ENCODE measurements at regions of chr10 and their contacts with region 1.

Region 1: GRCh38 chr10:13348216-13349017 is at the start of gene SEPHS1:
- DNase-seq: peak; percentile 51 to 89 (median 79)
- ATAC-seq: peak; percentile 67
- H3K4me3 ChIP-seq: peak within 1 kb of the TSS; percentile 83 to 93
- H3K4me3 Mint-ChIP-seq: peak within 1 kb of the TSS; percentile 96
- H3K27ac ChIP-seq: peak within 1 kb of the TSS; percentile 65 to 82
- H3K27ac Mint-ChIP-seq: peak within 1 kb of the TSS; percentile 94
- H3K4me1 ChIP-seq: peaks cover 48% of the 10 kb centered on the region
- H3K4me1 Mint-ChIP-seq: peaks cover 61% of the 10 kb centered on the region
- H3K27me3 ChIP-seq: no peaks in the 10 kb centered on the region
- H3K27me3 Mint-ChIP-seq: no peaks in the 10 kb centered on the region
- CTCF ChIP-seq: no peak
- total RNA-seq, gene SEPHS1: 16.9 to 19.2 TPM

Region 2: GRCh38 chr10:12042797-12043651 is 1305.4 kb before region 1 on chr10 and contains the start of gene UPF2:
- CTCF ChIA-PET with region 1: no interaction called
- POLR2A ChIA-PET with region 1: no interaction called
- intact Hi-C with region 1: loop called in 1 of 2 experiments (anchors 10 kb)
- DNase-seq: peak; percentile 93 to 98 (median 95)
- ATAC-seq: peak; percentile 86
- H3K4me3 ChIP-seq: peak within 1 kb of the TSS; percentile 93 to 96
- H3K4me3 Mint-ChIP-seq: peak within 1 kb of the TSS; percentile 94
- H3K27ac ChIP-seq: peak within 1 kb of the TSS; percentile 98 to 99
- H3K27ac Mint-ChIP-seq: peak within 1 kb of the TSS; percentile 100
- H3K4me1 ChIP-seq: peaks cover 14% of the 10 kb centered on the region
- H3K4me1 Mint-ChIP-seq: peaks cover 40% of the 10 kb centered on the region
- H3K27me3 ChIP-seq: peaks cover 0 to 2% of the 10 kb centered on the region in 2 experiments
- H3K27me3 Mint-ChIP-seq: no peaks in the 10 kb centered on the region
- CTCF ChIP-seq: no peak
- total RNA-seq, gene UPF2: 12.7 to 14.3 TPM

Region 3: DNA sequence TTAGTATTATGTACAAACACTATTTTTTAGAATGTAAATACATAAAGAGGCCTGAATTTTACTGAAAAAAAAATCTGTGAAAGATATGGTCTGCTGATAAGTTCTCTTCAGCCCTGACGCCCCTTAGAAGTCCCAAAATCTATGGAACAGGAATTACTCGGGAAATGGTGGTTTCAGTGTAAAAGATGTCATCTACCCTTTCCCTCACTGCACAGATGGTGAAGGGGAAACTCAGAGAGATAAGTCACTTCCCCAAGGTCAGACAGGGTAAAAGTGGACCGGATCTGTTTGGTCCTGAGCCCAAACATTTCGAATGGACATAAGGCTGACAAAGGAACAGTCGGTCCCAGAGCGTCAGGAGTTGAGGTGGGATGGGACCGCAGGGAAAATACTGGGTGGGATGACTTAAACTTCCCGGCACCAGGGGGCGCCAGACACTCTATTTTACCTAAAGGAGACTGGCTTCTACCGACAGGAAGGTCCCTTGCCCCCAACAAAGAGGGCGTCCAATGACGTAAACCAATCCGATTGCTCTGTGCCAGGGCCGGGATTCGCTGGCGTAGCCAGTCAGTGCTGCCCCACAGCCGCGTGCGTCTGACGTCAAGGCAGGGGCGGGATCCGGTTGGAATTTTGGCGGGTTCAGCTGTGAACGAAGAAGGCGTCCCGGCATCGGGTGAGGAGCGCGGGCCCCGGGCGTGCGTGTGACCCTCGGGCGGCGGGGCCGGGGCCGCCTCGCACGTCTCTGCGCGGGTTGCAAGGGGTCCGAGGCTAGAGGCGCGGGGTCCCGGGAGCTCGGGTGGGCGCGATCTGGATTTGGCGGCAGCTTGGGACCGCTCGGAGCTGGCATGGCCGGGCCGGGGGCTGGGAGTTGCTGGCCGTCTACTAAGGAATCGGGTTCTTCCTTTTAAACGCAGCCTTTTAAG is 187.2 kb before region 1 on chr10 and contains the start of gene MCM10:
- CTCF ChIA-PET with region 1: interaction called, 9 read pairs
- POLR2A ChIA-PET with region 1: no interaction called
- intact Hi-C with region 1: loop called (anchors 1 kb)
- DNase-seq: peak; percentile 93 to 99 (median 98)
- ATAC-seq: peak; percentile 100
- H3K4me3 ChIP-seq: peak within 1 kb of the TSS; percentile 44 to 49
- H3K4me3 Mint-ChIP-seq: peak within 1 kb of the TSS; percentile 88
- H3K27ac ChIP-seq: peak within 1 kb of the TSS in 1 of 2 experiments; percentile 40
- H3K27ac Mint-ChIP-seq: peak within 1 kb of the TSS; percentile 86
- H3K4me1 ChIP-seq: peaks cover 10% of the 10 kb centered on the region
- H3K4me1 Mint-ChIP-seq: peaks cover 14% of the 10 kb centered on the region
- H3K27me3 ChIP-seq: no peaks in the 10 kb centered on the region
- H3K27me3 Mint-ChIP-seq: no peaks in the 10 kb centered on the region
- CTCF ChIP-seq: peak; percentile 96
- total RNA-seq, gene MCM10: 0.08 to 0.19 TPM

Region 4: GRCh38 chr10:13299437-13300287 is 48.8 kb before region 1 on chr10 and contains the start of gene PHYH:
- CTCF ChIA-PET with region 1: interaction called, 30 read pairs
- POLR2A ChIA-PET with region 1: interaction called, 115 read pairs
- intact Hi-C with region 1: loop called (anchors 1 kb)
- DNase-seq: peak; percentile 65 to 93 (median 80)
- ATAC-seq: peak; percentile 52
- H3K4me3 ChIP-seq: peak within 1 kb of the TSS; percentile 68 to 70
- H3K4me3 Mint-ChIP-seq: peak within 1 kb of the TSS; percentile 84
- H3K27ac ChIP-seq: peak within 1 kb of the TSS; percentile 81 to 91
- H3K27ac Mint-ChIP-seq: peak within 1 kb of the TSS; percentile 94
- H3K4me1 ChIP-seq: peaks cover 28% of the 10 kb centered on the region
- H3K4me1 Mint-ChIP-seq: peaks cover 26% of the 10 kb centered on the region
- H3K27me3 ChIP-seq: no peaks in the 10 kb centered on the region
- H3K27me3 Mint-ChIP-seq: no peaks in the 10 kb centered on the region
- CTCF ChIP-seq: no peak
- total RNA-seq, gene PHYH: 12.6 TPM

Region 5: DNA sequence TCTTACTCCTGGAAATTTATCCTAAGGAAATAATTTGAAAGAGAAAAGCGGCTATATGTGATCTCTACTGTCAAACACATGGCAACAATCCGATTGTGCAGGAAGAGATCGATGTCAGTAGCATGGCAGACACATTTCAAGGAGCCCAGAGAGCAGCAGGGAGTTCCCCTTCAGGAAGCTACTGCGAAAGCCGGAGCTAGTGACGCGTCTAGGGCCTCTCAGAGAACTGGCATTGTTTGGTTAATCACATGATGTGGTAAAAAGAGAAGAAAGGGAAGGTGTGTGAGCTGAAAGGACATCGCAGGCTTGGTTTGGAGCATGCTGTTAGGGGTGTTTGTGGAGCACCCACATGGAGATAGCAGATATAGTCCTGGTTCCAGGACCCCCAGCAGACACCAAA is 105.5 kb after region 1 on chr10:
- CTCF ChIA-PET with region 1: no interaction called
- POLR2A ChIA-PET with region 1: no interaction called
- intact Hi-C with region 1: no loop called
- DNase-seq: peak in 4 of 9 experiments; percentile 5 to 52 (median 27)
- ATAC-seq: peak; percentile 82
- H3K4me3 ChIP-seq: no peak overlapping the region
- H3K4me3 Mint-ChIP-seq: no peak overlapping the region
- H3K27ac ChIP-seq: no peak overlapping the region
- H3K27ac Mint-ChIP-seq: no peak overlapping the region
- H3K4me1 ChIP-seq: no peaks in the 10 kb centered on the region
- H3K4me1 Mint-ChIP-seq: peaks cover 6% of the 10 kb centered on the region
- H3K27me3 ChIP-seq: no peaks in the 10 kb centered on the region
- H3K27me3 Mint-ChIP-seq: peaks cover 28% of the 10 kb centered on the region
- CTCF ChIP-seq: no peak

Region 6: GRCh38 chr10:15097011-15097812 is 1748.8 kb after region 1 on chr10 and contains the start of gene RPP38:
- CTCF ChIA-PET with region 1: no interaction called
- POLR2A ChIA-PET with region 1: no interaction called
- intact Hi-C with region 1: loop called in 1 of 2 experiments (anchors 5 kb)
- DNase-seq: peak; percentile 85 to 98 (median 95)
- ATAC-seq: peak; percentile 83
- H3K4me3 ChIP-seq: peak within 1 kb of the TSS; percentile 74 to 88
- H3K4me3 Mint-ChIP-seq: peak within 1 kb of the TSS; percentile 97
- H3K27ac ChIP-seq: peak within 1 kb of the TSS; percentile 92 to 96
- H3K27ac Mint-ChIP-seq: peak within 1 kb of the TSS; percentile 97
- H3K4me1 ChIP-seq: peaks cover 28% of the 10 kb centered on the region
- H3K4me1 Mint-ChIP-seq: peaks cover 35% of the 10 kb centered on the region
- H3K27me3 ChIP-seq: no peaks in the 10 kb centered on the region
- H3K27me3 Mint-ChIP-seq: no peaks in the 10 kb centered on the region
- CTCF ChIP-seq: no peak
- total RNA-seq, gene RPP38: 10.6 to 12.3 TPM